ENCODE measurements at regions of chr1 and their contacts with region 1.

Region 1: DNA sequence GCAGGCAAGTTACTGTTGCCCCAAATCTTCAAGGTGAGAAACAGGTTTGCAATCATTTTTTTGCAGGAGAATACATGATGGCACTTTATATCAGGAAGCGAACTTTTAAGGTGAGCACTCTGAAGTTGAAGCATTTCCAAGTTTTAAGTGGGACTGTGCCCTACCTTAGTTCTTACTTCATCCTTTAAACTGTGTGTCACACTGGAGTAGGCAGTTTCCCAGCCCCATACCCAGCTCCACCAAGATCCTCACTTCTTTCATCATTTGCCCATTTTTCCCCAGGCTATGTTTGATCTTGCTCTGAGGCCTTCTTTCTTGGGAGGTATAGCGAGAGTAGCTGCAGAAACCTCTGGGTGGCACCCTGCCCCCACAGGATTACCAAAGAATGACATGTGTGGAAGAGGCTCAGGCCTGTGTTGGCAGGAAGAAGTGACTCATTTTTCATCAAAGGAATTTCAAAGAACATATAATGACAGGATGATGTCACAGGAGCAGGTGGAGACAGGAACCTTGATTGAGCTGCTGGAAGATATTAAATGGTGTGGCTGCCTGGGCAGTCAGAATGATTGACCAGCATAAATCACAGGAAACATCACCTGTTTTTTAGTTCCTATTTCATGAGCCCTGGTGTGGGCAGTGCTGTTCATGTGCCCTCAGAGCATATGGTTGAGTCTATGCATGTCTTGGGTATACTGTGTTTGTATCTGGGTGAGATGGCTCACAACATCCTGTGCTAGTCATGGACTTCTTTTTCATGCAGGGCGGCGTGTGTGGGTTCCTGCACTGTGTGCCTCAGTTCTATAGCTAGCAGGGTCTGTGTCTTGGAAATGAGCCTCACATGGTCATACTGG is 20.8 kb upstream of the MACF1 start:
- DNase-seq: peak; percentile 94
- H3K4me3 Mint-ChIP-seq: peak overlapping the region; percentile 31
- H3K27ac Mint-ChIP-seq: peak overlapping the region; percentile 93
- H3K4me1 Mint-ChIP-seq: peaks cover 50% of the 10 kb centered on the region
- H3K27me3 Mint-ChIP-seq: no peaks in the 10 kb centered on the region

Region 2: GRCh38 chr1:39065542-39065941 is 118.2 kb before region 1 on chr1:
- CTCF ChIA-PET with region 1: no interaction called
- intact Hi-C with region 1: no loop called
- DNase-seq: no peak
- H3K4me3 Mint-ChIP-seq: no peak overlapping the region
- H3K27ac Mint-ChIP-seq: no peak overlapping the region
- H3K4me1 Mint-ChIP-seq: no peaks in the 10 kb centered on the region
- H3K27me3 Mint-ChIP-seq: no peaks in the 10 kb centered on the region

Region 3: GRCh38 chr1:39098546-39099250 is 85.0 kb before region 1 on chr1:
- CTCF ChIA-PET with region 1: interaction called, 9 read pairs
- intact Hi-C with region 1: loop called (anchors 1 kb)
- DNase-seq: peak; percentile 73
- H3K4me3 Mint-ChIP-seq: no peak overlapping the region
- H3K27ac Mint-ChIP-seq: no peak overlapping the region
- H3K4me1 Mint-ChIP-seq: peaks cover 21% of the 10 kb centered on the region
- H3K27me3 Mint-ChIP-seq: no peaks in the 10 kb centered on the region

Region 4: DNA sequence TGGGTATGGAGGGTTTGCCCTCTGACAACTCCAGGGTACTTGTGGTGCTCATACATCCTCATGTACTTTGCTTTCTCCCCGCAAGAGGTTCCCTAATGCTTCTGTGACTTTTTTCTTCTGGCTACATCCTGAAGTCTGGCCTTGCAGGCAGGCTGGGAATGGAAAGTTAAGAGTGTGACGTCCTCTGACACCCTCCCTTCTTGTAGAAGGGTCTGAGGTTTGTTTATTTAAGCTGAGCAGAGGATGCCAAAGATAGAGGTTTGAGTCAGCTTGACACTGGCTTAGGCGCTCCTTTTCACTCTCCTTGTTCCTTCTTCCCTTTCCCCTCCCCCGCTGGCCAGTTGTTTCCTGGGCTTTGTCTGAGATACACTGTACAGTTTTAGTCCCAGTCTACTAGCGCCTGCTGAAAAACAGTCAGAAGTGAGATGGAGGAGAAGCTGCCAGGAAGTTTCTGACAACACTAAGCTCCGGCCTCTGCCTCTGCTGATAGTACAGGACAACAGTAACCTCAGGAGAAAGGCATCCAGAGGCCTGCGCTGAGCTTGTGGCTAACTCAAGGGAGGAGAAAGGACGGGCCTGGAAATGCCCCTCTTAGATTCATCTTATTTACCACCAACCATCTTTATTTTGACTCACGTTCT is 20.8 kb after region 1 on chr1 and contains the start of gene MACF1:
- CTCF ChIA-PET with region 1: interaction called, 10 read pairs
- intact Hi-C with region 1: no loop called
- DNase-seq: peak; percentile 76
- H3K4me3 Mint-ChIP-seq: peak within 1 kb of the TSS; percentile 81
- H3K27ac Mint-ChIP-seq: peak within 1 kb of the TSS; percentile 98
- H3K4me1 Mint-ChIP-seq: peaks cover 55% of the 10 kb centered on the region
- H3K27me3 Mint-ChIP-seq: no peaks in the 10 kb centered on the region
- total RNA-seq, gene MACF1: 174 to 179 TPM

Region 5: DNA sequence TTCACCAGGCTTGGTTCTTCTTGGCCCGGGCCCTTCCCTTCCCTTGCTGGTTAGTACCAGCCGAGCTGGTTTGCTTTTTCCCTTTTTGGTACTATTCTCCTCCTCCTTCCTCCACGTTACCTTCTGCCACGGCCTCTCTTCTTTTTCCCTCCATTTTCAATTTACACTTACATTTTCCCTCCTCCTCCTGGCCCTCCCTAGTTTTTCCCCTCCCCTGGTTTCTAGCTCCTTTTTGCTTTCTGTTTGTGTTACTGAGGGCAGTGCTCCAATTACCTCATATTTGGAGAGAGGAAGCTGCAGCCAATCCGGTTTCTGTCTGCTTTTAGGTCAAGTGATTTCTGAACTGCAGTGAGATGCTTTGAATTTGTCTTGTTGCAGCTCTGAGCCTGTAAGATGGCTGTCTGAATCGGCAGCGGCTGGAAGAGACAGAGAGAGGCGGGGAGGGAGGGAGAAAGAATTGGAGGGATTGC is 84.4 kb after region 1 on chr1:
- CTCF ChIA-PET with region 1: interaction called, 12 read pairs
- intact Hi-C with region 1: no loop called
- DNase-seq: peak; percentile 30
- H3K4me3 Mint-ChIP-seq: peak overlapping the region; percentile 69
- H3K27ac Mint-ChIP-seq: peak overlapping the region; percentile 54
- H3K4me1 Mint-ChIP-seq: peaks cover 75% of the 10 kb centered on the region
- H3K27me3 Mint-ChIP-seq: no peaks in the 10 kb centered on the region

Region 6: DNA sequence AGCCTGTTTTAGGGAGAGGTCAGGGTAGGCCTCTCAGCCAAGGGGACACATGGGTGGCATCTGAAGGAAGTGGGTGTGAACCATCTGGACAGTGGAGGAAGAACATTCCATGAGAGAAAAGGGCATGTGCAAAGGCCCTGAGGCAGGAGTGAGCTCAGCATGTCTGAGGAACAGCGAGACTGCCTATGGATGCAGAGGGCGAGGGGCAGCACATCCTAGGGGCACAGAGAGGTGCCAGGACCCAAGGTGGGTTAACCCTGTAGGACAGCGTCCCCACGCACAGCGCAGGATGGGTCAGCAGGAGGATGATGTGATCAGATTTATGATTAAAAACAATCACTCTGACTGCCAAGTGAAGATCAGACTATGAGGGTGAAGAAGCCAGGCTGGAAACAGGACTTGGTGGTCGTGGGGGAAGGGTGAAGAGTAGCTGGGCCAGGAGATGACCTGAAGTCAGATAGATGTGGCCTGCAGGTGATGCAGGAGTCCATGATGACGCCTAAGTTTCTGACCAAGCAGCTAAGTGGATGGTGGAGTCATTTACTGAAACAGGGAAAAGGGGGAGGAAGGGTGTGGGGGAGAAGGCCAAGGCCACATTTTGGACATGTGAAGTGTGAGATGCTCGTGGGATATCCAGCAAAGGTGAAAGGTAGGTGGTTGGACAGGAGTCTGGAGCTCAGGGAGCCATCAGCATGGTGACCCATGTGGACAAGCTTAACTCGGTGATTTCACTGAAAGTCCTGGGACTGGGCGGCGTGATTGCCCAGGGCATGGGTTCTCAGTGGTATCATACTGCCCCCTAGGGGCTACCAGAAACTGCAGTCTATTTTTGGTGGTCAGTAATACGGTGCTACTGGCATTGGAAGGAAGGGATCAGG is 355.1 kb after region 1 on chr1:
- CTCF ChIA-PET with region 1: interaction called, 3 read pairs
- intact Hi-C with region 1: loop called (anchors 2 kb)
- DNase-seq: peak; percentile 63
- H3K4me3 Mint-ChIP-seq: no peak overlapping the region
- H3K27ac Mint-ChIP-seq: no peak overlapping the region
- H3K4me1 Mint-ChIP-seq: no peaks in the 10 kb centered on the region
- H3K27me3 Mint-ChIP-seq: no peaks in the 10 kb centered on the region

Region 7: GRCh38 chr1:39738622-39739366 is 555.1 kb after region 1 on chr1 and contains the start of gene PPIE:
- CTCF ChIA-PET with region 1: no interaction called
- intact Hi-C with region 1: loop called (anchors 5 kb)
- DNase-seq: peak; percentile 99
- H3K4me3 Mint-ChIP-seq: peak within 1 kb of the TSS; percentile 97
- H3K27ac Mint-ChIP-seq: peak within 1 kb of the TSS; percentile 90
- H3K4me1 Mint-ChIP-seq: peaks cover 26% of the 10 kb centered on the region
- H3K27me3 Mint-ChIP-seq: peaks cover 2% of the 10 kb centered on the region
- total RNA-seq, gene PPIE: 73.8 to 75.6 TPM